Left cardiac atrium (tissue), 4 donors: ENCODE measurements at regions of chr22 and their contacts with region 1.

Region 1: GRCh38 chr22:50244420-50245213 is at the start of gene TUBGCP6:
- DNase-seq: peak; percentile 97
- ATAC-seq: peak; percentile 94 to 96
- total RNA-seq, gene TUBGCP6: 20.4 to 22.0 TPM

Region 2: GRCh38 chr22:50507991-50508884 is 263.6 kb after region 1 on chr22 and contains the start of gene NCAPH2:
- intact Hi-C with region 1: loop called in 1 of 2 experiments (anchors 10 kb)
- DNase-seq: peak; percentile 96
- ATAC-seq: peak; percentile 80 to 85
- total RNA-seq, gene NCAPH2: 29.8 to 32.7 TPM

Region 3: DNA sequence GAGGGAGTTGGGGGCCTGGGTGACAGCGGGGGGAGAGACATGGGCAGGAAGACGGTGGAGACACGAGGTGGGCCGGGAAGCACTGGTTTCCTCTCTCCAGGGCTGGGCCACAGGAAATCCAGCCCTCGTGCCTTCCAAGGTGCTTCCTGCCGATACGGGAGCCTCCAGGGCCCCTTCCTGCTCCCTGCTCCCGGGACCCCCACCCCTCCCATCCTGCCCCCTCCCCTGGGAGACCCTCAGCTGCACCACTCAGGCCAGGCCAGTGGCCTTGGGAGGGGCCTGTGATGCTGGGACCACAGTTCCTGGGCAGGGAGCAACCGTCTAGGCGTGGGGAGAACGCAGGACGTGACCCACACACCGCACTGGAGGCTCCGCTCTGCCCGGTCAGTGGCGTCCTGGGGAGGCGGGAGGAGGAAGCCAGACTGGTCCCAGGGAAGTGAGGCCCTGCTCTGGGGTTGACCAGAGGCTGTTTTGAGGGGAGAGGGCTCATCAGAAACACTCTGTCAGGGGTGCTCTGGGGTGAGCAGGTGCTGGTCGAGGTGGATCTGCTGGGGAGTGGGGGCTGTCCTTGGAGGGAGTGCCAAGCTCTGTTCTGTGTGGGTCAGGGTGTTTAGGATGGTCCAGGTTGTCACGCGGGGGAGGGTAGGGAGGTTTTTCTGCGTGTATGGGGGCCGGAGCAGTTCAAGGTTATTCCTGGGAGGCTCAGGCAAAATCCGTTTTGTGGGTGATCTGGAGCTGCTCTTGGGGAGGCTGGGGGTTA is 428.0 kb after region 1 on chr22 and contains the start of gene SHANK3:
- intact Hi-C with region 1: no loop called
- DNase-seq: peak; percentile 89
- ATAC-seq: peak; percentile 70 to 82
- total RNA-seq, gene SHANK3: 19.5 to 34.1 TPM